Activated CD4-positive, alpha-beta memory T cell treated with anti-CD3 and anti-CD28 coated beads for 36 hours (primary cell): ENCODE measurements at regions of chr5 and their contacts with region 1.

Region 1: GRCh38 chr5:73448463-73449136 is at the start of gene FOXD1:
- DNase-seq: peak; percentile 69
- H3K4me3 Mint-ChIP-seq: peak within 1 kb of the TSS; percentile 75
- H3K27ac Mint-ChIP-seq: peak within 1 kb of the TSS; percentile 51
- H3K4me1 Mint-ChIP-seq: peaks cover 22% of the 10 kb centered on the region
- H3K27me3 Mint-ChIP-seq: peaks cover 70% of the 10 kb centered on the region
- total RNA-seq, gene FOXD1: 0.38 to 0.46 TPM

Region 2: DNA sequence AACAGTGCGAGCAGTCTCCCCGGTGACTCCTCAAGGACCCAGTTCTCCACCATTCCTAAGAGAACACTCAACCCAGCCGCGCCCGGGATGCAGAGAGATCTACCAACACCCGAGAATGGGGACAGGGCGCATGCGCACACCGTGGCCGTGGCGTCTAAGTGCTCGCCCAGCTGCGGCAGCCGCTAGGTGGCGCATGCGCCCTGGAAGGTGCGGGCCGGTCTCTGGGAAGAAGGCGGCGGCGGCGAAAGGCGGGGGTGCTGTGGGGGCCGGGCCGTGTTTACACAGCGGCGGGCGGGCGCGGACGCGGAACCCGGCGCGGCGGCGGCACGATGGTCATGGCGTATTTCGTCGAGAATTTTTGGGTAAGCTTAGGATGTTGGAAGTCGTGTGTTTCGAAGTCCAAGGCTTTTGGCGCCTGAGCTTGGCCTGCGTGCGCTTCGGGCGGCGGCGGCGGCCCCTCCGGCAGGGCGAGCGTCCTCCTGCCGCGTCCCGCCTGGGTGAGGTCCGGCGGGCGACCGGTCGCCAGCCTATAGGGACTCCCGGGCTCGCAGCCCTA is 492.8 kb before region 1 on chr5 and contains the start of gene FCHO2:
- CTCF ChIA-PET with region 1: interaction called, 3 read pairs
- POLR2A ChIA-PET with region 1: no interaction called
- intact Hi-C with region 1: loop called (anchors 5 kb)
- DNase-seq: peak; percentile 95
- H3K4me3 Mint-ChIP-seq: peak within 1 kb of the TSS; percentile 87
- H3K27ac Mint-ChIP-seq: peak within 1 kb of the TSS; percentile 49
- H3K4me1 Mint-ChIP-seq: peaks cover 14% of the 10 kb centered on the region
- H3K27me3 Mint-ChIP-seq: peaks cover 43% of the 10 kb centered on the region
- total RNA-seq, gene FCHO2: 1.3 TPM

Region 3: GRCh38 chr5:73215891-73216610 is 232.5 kb before region 1 on chr5:
- CTCF ChIA-PET with region 1: interaction called, 22 read pairs
- POLR2A ChIA-PET with region 1: no interaction called
- intact Hi-C with region 1: loop called (anchors 2 kb)
- DNase-seq: peak; percentile 76
- H3K4me3 Mint-ChIP-seq: no peak overlapping the region
- H3K27ac Mint-ChIP-seq: no peak overlapping the region
- H3K4me1 Mint-ChIP-seq: peaks cover 16% of the 10 kb centered on the region
- H3K27me3 Mint-ChIP-seq: peaks cover 69% of the 10 kb centered on the region

Region 4: DNA sequence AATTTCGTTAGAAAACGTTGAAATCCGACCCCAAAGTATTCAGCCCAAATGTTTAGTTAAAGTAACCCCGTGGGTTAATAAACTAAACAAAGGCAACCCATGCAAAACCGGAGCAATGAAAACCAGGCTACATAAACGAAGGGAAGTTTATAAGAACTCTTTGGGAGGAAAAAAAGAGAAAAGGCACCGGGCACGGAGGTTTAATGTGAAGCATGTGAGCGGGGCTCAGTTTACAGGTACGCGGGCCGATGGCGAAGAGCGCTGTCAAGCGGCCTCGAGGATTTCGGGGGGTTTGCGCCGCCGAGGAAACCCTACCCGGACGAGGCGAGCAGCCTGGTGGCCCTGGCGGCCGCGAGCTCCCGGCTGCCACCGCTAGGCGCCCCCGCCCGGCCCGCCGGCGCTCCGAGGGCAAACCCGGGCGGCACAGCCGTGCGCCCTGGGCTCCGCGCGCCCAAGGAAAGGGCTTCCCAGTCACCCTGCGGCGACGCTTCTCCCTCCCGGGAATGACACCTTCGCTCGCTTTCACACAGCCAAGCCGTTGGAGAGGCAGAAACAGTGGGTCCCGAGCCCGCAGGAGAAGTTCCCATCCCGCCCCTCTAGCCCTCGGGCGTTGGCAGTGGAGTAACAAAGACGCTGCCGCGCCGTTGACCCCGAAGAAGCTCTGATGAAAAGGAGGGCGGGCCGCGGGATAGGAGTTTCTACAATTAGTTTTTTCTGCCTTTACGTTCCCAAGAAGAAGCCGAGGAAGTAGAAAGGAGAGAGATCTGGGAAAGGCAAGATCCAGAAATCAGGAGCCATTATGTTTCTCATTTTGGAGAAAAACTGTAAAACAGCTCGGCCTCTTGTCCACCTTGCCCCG is 149.6 kb before region 1 on chr5:
- CTCF ChIA-PET with region 1: interaction called, 12 read pairs
- POLR2A ChIA-PET with region 1: interaction called, 3 read pairs
- intact Hi-C with region 1: loop called (anchors 2 kb)
- DNase-seq: peak; percentile 13
- H3K4me3 Mint-ChIP-seq: no peak overlapping the region
- H3K27ac Mint-ChIP-seq: no peak overlapping the region
- H3K4me1 Mint-ChIP-seq: peaks cover 18% of the 10 kb centered on the region
- H3K27me3 Mint-ChIP-seq: peaks cover 82% of the 10 kb centered on the region

Region 5: DNA sequence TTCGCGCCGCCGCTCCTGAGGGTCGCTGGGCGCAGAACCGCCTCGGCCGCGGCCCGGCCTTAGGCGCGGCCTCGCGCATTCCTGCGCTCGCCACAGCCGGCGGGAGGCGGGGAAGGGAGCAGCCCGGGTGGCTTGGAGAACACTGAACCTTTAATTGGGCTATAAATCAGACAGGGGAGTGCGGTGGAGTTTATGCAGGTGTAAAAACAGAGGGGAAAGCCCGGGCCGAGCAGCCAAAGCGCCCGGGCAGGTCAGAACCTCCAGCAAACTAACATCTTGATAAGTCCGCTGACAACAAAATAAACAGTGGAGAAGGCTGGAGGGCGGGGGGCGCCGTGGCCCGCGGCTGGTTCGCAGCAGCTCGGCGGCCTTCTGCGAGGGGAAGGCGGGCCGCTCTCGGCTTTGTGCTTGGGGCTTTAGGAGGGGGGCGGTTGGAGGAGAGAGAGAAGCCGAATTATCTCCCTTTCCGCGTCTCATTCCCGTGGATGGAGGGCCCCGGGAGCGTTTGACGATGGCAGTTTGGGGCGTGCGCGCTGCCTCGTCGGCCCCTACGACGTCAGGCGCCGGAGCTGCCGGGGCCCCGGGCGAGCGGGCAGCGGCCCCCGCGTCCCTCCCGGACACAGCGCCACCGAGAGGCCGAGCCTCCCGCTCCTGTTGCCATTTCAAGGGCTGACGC is 11.4 kb before region 1 on chr5:
- CTCF ChIA-PET with region 1: interaction called, 16 read pairs
- POLR2A ChIA-PET with region 1: no interaction called
- intact Hi-C with region 1: loop called (anchors 2 kb)
- DNase-seq: peak; percentile 22
- H3K4me3 Mint-ChIP-seq: peak overlapping the region; percentile 51
- H3K27ac Mint-ChIP-seq: no peak overlapping the region
- H3K4me1 Mint-ChIP-seq: peaks cover 14% of the 10 kb centered on the region
- H3K27me3 Mint-ChIP-seq: peaks cover 77% of the 10 kb centered on the region